Panc1 (cell line): ENCODE measurements at regions of chr10 and their contacts with region 1.

Region 1: GRCh38 chr10:31725436-31725835 is 203.2 kb downstream of the ARHGAP12 start:
- DNase-seq: no peak
- ATAC-seq: no peak
- H3K4me3 ChIP-seq: no peak overlapping the region
- H3K27ac ChIP-seq: no peak overlapping the region
- H3K4me1 ChIP-seq: no peaks in the 10 kb centered on the region
- H3K27me3 ChIP-seq: no peaks in the 10 kb centered on the region
- CTCF ChIP-seq: no peak

Region 2: DNA sequence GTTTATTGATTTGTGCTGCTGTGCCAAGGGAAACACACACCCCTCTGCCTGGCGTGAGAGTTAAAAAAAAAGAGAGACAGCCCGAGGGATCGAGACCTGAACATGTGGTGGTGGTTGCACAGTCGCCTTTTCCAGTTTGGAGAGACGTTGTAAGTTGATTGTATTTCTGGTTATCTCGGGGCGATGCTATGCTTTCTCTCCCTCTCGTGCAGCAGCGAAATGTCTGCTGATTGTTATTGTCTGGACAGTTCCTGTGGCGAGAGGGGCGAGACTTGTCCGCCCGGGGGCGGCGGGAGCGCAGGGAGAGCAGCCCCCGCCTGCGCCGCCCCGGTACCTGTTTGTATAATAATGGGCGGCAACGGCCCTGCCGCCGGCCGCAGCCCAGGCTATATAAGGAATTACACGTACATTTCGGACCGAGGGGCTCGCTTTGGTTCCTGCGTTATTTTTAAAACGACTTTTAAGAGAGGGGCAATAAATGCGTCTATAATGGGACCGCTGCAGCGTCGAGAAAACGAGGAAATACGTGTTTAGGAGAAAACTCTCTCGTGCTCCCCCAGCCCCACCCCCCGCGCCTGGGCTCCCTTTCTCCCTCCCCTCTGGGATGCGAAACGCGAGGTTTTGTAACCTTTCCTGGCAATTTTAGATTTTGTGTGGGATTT is 404.8 kb before region 1 on chr10:
- CTCF ChIA-PET with region 1: no interaction called
- POLR2A ChIA-PET with region 1: interaction called, 15 read pairs
- in situ Hi-C with region 1: no loop called
- intact Hi-C with region 1: no loop called
- DNase-seq: no peak
- ATAC-seq: peak; percentile 33; the same call in 1 of the 2 replicates
- H3K4me3 ChIP-seq: peak overlapping the region; percentile 68 to 87
- H3K27ac ChIP-seq: peak overlapping the region; percentile 73
- H3K4me1 ChIP-seq: peaks cover 17% of the 10 kb centered on the region
- H3K27me3 ChIP-seq: no peaks in the 10 kb centered on the region
- CTCF ChIP-seq: no peak

Region 3: GRCh38 chr10:32005050-32005449 is 279.6 kb after region 1 on chr10:
- CTCF ChIA-PET with region 1: no interaction called
- POLR2A ChIA-PET with region 1: no interaction called
- in situ Hi-C with region 1: no loop called
- intact Hi-C with region 1: no loop called
- DNase-seq: peak; percentile 35
- ATAC-seq: peak; percentile 82
- H3K4me3 ChIP-seq: no peak overlapping the region
- H3K27ac ChIP-seq: no peak overlapping the region
- H3K4me1 ChIP-seq: peaks cover 7% of the 10 kb centered on the region; the same call in 1 of the 2 replicates
- H3K27me3 ChIP-seq: no peaks in the 10 kb centered on the region
- CTCF ChIP-seq: peak; percentile 71

Region 4: GRCh38 chr10:32017021-32017420 is 291.6 kb after region 1 on chr10:
- CTCF ChIA-PET with region 1: no interaction called
- POLR2A ChIA-PET with region 1: interaction called, 10 read pairs
- in situ Hi-C with region 1: no loop called
- intact Hi-C with region 1: no loop called
- DNase-seq: no peak
- ATAC-seq: no peak
- H3K4me3 ChIP-seq: no peak overlapping the region
- H3K27ac ChIP-seq: no peak overlapping the region
- H3K4me1 ChIP-seq: no peaks in the 10 kb centered on the region
- H3K27me3 ChIP-seq: no peaks in the 10 kb centered on the region
- CTCF ChIP-seq: no peak